Breast epithelium (tissue), 4 donors: ENCODE measurements at regions of chr1 and their contacts with region 1.

Region 1: GRCh38 chr1:181050922-181051321 is 17.1 kb downstream of the MR1 start:
- DNase-seq: no peak
- H3K4me3 ChIP-seq: no peak overlapping the region
- H3K27ac ChIP-seq: no peak overlapping the region
- H3K4me1 ChIP-seq: no peaks in the 10 kb centered on the region
- H3K27me3 ChIP-seq: no peaks in the 10 kb centered on the region
- CTCF ChIP-seq: no peak
- POLR2A ChIP-seq: no peak

Region 2: GRCh38 chr1:180631766-180632325 is 419.1 kb before region 1 on chr1 and contains the start of gene XPR1:
- intact Hi-C with region 1: loop called (anchors 5 kb)
- DNase-seq: peak; percentile 98
- H3K4me3 ChIP-seq: peak within 1 kb of the TSS; percentile 86 to 95 (median 91)
- H3K27ac ChIP-seq: peak within 1 kb of the TSS; percentile 92 to 97
- H3K4me1 ChIP-seq: no peaks in the 10 kb centered on the region
- H3K27me3 ChIP-seq: no peaks in the 10 kb centered on the region
- CTCF ChIP-seq: peak in 2 of 3 donors; percentile 31 to 41
- POLR2A ChIP-seq: peak; percentile 85
- total RNA-seq, gene XPR1: 19.0 to 49.5 (median 35.7) TPM